Mammary epithelial cell (primary cell): ENCODE measurements at regions of chr5 and their contacts with region 1.

Region 1: GRCh38 chr5:149990518-149991376 is 9.7 kb downstream of the TIGD6 start:
- DNase-seq: peak; percentile 57
- H3K4me3 ChIP-seq: no peak overlapping the region
- H3K27ac ChIP-seq: no peak overlapping the region
- H3K4me1 ChIP-seq: no peaks in the 10 kb centered on the region
- H3K27me3 ChIP-seq: no peaks in the 10 kb centered on the region
- CTCF ChIP-seq: peak; percentile 96 to 97

Region 2: GRCh38 chr5:149979896-149980295 is 10.9 kb before region 1 on chr5:
- CTCF ChIA-PET with region 1: interaction called, 11 read pairs
- dilution Hi-C with region 1: no loop called
- in situ Hi-C with region 1: no loop called
- intact Hi-C with region 1: no loop called
- DNase-seq: no peak
- H3K4me3 ChIP-seq: no peak overlapping the region
- H3K27ac ChIP-seq: no peak overlapping the region
- H3K4me1 ChIP-seq: peaks cover 3% of the 10 kb centered on the region
- H3K27me3 ChIP-seq: no peaks in the 10 kb centered on the region
- CTCF ChIP-seq: no peak